Heart right ventricle (tissue), 16 donors: ENCODE measurements at regions of chr18 and their contacts with region 1.

Region 1: GRCh38 chr18:3029215-3029952 is 16.4 kb upstream of the LPIN2 start:
- DNase-seq: no peak
- ATAC-seq: peak in 2 of 8 donors; percentile 42 to 59
- H3K4me3 ChIP-seq: no peak overlapping the region
- H3K27ac ChIP-seq: peak overlapping the region in 3 of 10 donors; percentile 17 to 35 (median 19)
- H3K4me1 ChIP-seq: peaks cover 0 to 19% (median 12%) of the 10 kb centered on the region in 9 donors
- H3K27me3 ChIP-seq: no peaks in the 10 kb centered on the region
- CTCF ChIP-seq: no peak

Region 2: DNA sequence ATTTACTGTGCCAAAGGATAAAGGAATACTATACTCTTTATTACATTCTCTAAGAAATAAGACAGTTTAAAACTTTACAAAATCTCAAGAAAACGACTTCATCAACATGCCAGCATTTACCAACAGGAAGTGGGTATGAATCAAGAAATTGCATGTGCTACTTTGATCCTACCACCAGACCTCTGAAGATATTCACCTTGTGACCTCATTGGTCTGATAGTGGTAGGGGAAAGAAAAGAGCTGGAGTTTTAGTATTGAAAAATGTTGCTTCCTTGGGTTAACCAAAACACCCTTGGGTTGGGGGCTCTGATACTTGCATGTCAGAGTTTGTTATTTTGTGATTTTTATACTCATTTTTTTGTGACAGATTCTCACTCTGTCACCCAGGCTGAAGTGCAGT is 67.7 kb after region 1 on chr18:
- intact Hi-C with region 1: loop called in 1 of 10 experiments (anchors 2 kb)
- DNase-seq: no peak
- ATAC-seq: no peak
- H3K4me3 ChIP-seq: no peak overlapping the region
- H3K27ac ChIP-seq: peak overlapping the region in 1 of 10 donors; percentile 4
- H3K4me1 ChIP-seq: peaks cover 0 to 37% (median 8%) of the 10 kb centered on the region in 9 donors
- H3K27me3 ChIP-seq: no peaks in the 10 kb centered on the region
- CTCF ChIP-seq: no peak